Activated T-helper 2 cell treated with anti-CD3 and anti-CD28 coated beads, Interferon-gamma antibody, Interleukin-2, Interleukin-4, amounts not matched to agents 10 μg/mL and 5 μg/mL and 100 μg/mL, durations not matched to agents 14 hours and 24 hours and 36 hours (primary cell): ENCODE measurements at regions of chr9 and their contacts with region 1.

Region 1: DNA sequence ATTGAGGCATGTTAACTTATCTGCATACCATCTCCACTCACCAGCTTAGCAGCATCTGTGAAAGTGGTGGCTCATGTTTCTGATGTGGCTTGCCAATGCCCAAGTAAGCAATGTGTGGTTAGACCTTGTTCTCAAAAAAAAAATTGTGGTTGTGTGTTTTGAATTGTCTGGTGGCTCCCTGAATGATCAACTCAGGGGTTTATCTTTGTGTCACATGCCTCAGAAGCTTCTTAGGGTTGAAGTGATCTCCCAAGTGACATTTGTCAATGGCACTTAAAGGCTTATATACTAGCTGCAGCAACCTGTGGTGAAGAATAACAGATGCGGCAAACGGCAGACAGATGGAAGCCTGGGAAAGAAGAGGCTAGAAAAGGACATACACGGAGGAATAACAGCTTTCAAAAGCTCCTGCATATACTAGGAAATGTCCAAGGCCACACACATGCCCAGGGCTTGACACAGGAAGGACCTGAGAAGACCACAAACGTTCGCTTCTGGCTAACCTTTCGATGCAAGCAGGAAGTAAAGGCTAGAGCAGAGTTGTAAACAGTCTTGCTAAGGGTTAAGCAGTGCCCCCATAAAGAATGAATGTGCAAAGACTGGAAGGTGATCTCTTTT is 42.2 kb upstream of the FSD1L start:
- DNase-seq: peak; percentile 69
- H3K4me3 Mint-ChIP-seq: peak overlapping the region; percentile 31
- H3K27ac Mint-ChIP-seq: no peak overlapping the region
- H3K4me1 Mint-ChIP-seq: peaks cover 24% of the 10 kb centered on the region
- H3K27me3 Mint-ChIP-seq: peaks cover 58% of the 10 kb centered on the region

Region 2: GRCh38 chr9:104927912-104928740 is 477.5 kb before region 1 on chr9 and contains the start of gene ABCA1:
- intact Hi-C with region 1: loop called (anchors 1 kb)
- DNase-seq: peak; percentile 38
- H3K4me3 Mint-ChIP-seq: peak within 1 kb of the TSS; percentile 72
- H3K27ac Mint-ChIP-seq: no peak within 1 kb of the TSS
- H3K4me1 Mint-ChIP-seq: peaks cover 5% of the 10 kb centered on the region
- H3K27me3 Mint-ChIP-seq: peaks cover 54% of the 10 kb centered on the region
- total RNA-seq, gene ABCA1: 0.14 TPM in 1 of 2 replicates, not detected in the other

Region 3: DNA sequence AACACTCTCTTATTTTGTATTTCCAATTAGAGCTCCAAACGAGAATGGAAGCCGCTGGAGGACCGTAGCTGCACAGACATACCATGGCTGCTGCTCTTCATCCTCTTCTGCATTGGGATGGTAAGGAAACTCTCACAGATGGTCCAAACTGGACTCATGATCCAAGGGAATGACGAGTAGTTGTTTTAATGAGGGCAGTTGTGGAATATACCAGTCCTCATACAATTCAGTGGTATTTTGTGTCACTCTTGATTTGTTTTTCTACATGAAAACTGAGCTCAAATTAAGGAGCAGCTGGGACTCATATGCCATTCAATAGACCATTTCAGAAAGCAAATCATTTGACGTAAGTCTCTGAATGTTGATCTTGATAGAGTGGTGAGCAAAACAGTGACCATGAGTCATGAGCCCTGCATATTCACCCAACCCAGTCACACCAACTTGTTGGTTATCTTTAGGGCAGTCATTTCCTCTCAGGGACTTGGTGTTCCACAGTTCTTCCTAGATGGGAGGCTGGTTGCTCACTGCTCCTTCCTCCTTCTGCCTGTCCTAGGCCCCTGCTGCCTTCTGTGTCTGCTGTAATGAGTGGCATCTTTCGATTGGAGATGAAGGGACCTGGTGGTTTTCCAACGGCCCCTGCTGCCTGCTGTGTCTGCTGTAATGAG is 106.3 kb before region 1 on chr9:
- intact Hi-C with region 1: loop called (anchors 1 kb)
- DNase-seq: no peak
- H3K4me3 Mint-ChIP-seq: no peak overlapping the region
- H3K27ac Mint-ChIP-seq: peak overlapping the region; percentile 35
- H3K4me1 Mint-ChIP-seq: peaks cover 34% of the 10 kb centered on the region
- H3K27me3 Mint-ChIP-seq: peaks cover 22% of the 10 kb centered on the region

Region 4: GRCh38 chr9:105359892-105360291 is 45.7 kb before region 1 on chr9:
- intact Hi-C with region 1: loop called (anchors 1 kb)
- DNase-seq: peak; percentile 18
- H3K4me3 Mint-ChIP-seq: no peak overlapping the region
- H3K27ac Mint-ChIP-seq: no peak overlapping the region
- H3K4me1 Mint-ChIP-seq: peaks cover 25% of the 10 kb centered on the region
- H3K27me3 Mint-ChIP-seq: peaks cover 35% of the 10 kb centered on the region

Region 5: GRCh38 chr9:105385381-105385985 is 20.1 kb before region 1 on chr9:
- intact Hi-C with region 1: loop called (anchors 2 kb)
- DNase-seq: peak; percentile 24
- H3K4me3 Mint-ChIP-seq: peak overlapping the region; percentile 82
- H3K27ac Mint-ChIP-seq: peak overlapping the region; percentile 69
- H3K4me1 Mint-ChIP-seq: peaks cover 22% of the 10 kb centered on the region
- H3K27me3 Mint-ChIP-seq: peaks cover 46% of the 10 kb centered on the region

Region 6: DNA sequence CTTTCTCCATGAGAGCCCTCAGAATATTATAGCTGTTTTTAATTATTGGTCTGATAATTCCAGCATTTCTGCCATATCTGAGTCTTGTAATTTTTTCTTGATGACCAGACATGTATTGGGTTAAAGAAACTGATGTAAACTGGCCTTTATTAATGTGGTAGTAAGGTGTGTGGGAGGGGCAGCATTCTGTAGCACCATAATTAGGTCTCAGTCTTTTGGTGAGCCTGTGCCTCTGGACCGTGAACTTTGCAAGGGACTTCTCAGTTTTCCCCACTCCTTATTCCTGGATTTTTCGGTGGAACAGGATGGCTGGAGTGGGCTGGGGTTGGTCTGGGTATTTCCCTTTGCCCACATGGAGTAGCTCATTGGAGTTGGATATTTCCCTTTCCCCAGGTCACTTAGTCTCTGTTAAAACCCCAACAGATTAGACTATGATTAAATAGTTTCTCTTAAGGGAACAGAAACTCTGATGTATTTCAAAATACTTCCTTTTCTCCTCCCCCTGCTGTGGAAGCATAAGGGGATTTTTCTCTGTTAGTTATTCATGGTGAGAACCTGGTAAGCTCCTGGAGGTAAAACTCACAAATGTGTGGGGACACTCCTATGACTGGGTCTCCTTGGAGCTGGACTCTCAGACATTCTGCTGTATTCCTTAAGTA is 94.6 kb after region 1 on chr9:
- intact Hi-C with region 1: no loop called
- DNase-seq: no peak
- H3K4me3 Mint-ChIP-seq: no peak overlapping the region
- H3K27ac Mint-ChIP-seq: no peak overlapping the region
- H3K4me1 Mint-ChIP-seq: peaks cover 5% of the 10 kb centered on the region
- H3K27me3 Mint-ChIP-seq: no peaks in the 10 kb centered on the region